ENCODE measurements at regions of chr13 and their contacts with region 1.

Region 1: DNA sequence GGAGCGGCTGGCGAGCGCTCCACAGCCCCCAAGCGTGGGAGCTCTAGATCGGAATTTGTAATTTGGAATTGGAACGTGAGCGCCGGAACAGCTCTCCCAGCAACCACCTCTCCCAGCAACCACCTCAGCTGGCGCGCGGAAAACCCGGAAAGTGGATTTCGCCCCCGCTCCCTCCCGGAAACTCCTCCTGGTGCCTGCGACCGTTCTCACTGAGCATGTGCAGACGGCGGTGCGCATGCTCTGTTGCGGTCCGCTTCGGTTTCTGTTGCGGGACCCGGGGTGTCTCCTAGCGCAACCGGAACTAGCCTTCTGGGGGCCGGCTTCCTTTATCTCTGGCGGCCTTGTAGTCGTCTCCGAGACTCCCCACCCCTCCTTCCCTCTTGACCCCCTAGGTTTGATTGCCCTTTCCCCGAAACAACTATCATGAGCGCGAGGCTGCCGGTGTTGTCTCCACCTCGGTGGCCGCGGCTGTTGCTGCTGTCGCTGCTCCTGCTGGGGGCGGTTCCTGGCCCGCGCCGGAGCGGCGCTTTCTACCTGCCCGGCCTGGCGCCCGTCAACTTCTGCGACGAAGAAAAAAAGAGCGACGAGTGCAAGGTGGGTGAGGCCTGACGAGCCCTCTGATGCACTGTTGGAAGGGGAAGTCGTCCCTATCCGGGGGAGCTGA is at the start of gene TM9SF2:
- DNase-seq: peak; percentile 94 to 98 (median 96)
- ATAC-seq: peak; percentile 70
- H3K4me3 ChIP-seq: peak within 1 kb of the TSS; percentile 93
- H3K4me3 Mint-ChIP-seq: peak within 1 kb of the TSS; percentile 94 to 100 (median 97)
- H3K27ac ChIP-seq: peak within 1 kb of the TSS; percentile 94
- H3K27ac Mint-ChIP-seq: peak within 1 kb of the TSS; percentile 96 to 99 (median 98)
- H3K4me1 ChIP-seq: peaks cover 47 to 65% of the 10 kb centered on the region in 2 donors
- H3K4me1 Mint-ChIP-seq: peaks cover 57 to 93% (median 85%) of the 10 kb centered on the region in 7 donors
- H3K27me3 ChIP-seq: no peaks in the 10 kb centered on the region
- H3K27me3 Mint-ChIP-seq: peaks cover 0 to 4% (median 0%) of the 10 kb centered on the region in 5 donors
- total RNA-seq, gene TM9SF2: 38.0 to 76.3 (median 53.1) TPM

Region 2: DNA sequence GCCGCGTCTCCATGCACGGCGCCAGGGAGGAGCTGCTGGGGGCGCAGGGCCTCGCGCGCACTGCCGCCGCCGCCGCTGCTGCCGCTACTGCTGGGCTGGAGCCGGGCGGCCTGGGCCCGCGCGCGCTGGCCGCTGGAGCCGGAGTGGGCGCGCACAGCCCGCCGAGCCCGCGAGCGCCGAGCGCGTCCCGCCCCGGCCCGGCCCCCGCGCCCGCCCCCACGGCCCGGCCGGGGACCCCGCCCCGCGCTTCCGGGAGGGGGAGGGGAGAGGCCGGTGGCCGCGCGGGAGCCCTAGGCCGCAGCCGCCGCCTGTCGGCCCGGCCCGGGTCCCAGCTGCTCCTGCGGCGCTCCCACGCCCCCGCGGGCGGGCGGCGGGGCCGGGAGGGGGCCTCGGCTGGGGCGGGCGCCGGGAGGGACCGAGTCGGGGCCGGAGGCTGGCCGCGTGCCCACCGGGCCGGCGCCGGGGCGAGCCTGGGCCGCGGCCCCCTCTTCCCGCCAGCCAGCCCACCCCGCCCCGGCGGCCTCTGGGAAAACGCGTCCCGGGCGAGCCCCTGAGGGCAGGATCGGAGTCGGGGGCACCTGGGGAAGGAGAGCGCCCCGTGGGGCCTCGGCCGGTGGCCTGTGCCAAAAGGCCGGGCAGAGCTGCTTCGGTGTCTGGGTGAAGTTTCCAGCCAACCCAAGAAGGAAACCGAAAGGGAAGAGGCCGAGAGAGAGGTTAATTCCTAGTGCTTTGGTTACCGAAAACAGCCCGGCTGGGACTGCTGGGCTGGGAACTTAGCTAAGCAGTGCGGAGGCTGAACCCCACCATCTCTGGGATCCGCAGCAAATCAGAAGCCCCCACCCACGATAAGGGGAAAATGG is 924.1 kb before region 1 on chr13 and contains the start of gene STK24:
- CTCF ChIA-PET with region 1: no interaction called
- POLR2A ChIA-PET with region 1: no interaction called
- intact Hi-C with region 1: loop called in 1 of 2 experiments (anchors 5 kb)
- DNase-seq: peak in 5 of 9 donors; percentile 34 to 87 (median 66)
- ATAC-seq: peak; percentile 85
- H3K4me3 ChIP-seq: peak within 1 kb of the TSS; percentile 72
- H3K4me3 Mint-ChIP-seq: peak within 1 kb of the TSS; percentile 84 to 99 (median 93)
- H3K27ac ChIP-seq: peak within 1 kb of the TSS; percentile 85
- H3K27ac Mint-ChIP-seq: peak within 1 kb of the TSS; percentile 84 to 96 (median 93)
- H3K4me1 ChIP-seq: peaks cover 26 to 35% of the 10 kb centered on the region in 2 donors
- H3K4me1 Mint-ChIP-seq: peaks cover 35 to 48% (median 37%) of the 10 kb centered on the region in 7 donors
- H3K27me3 ChIP-seq: no peaks in the 10 kb centered on the region
- H3K27me3 Mint-ChIP-seq: no peaks in the 10 kb centered on the region
- total RNA-seq, gene STK24: 90.1 to 148 (median 121) TPM

Region 3: DNA sequence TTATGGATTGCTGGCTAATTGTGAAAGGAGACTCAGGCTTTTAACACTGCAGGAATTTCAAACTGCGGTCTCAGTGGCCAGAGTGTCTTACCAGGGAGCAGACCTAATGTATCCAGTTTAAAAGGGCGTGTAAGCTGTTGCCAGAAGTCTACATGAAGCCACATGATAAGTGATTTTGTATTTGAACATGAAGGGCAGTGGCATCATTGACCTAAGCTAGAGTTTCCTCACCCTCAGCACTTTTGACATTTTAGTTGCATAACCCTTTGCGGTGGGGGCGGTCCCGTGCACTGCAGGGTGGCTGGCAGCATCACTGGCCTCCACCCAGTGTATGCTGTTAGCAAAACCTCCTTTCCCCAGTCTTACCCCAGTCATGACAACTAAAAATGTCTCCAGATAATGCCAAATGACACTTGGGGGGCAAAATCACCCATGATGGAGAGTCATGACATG is 219.5 kb before region 1 on chr13:
- CTCF ChIA-PET with region 1: no interaction called
- POLR2A ChIA-PET with region 1: no interaction called
- intact Hi-C with region 1: loop called (anchors 5 to 10 kb)
- DNase-seq: peak in 7 of 9 donors; percentile 45 to 65 (median 55)
- ATAC-seq: peak; percentile 85
- H3K4me3 ChIP-seq: peak overlapping the region; percentile 10
- H3K4me3 Mint-ChIP-seq: peak overlapping the region; percentile 36 to 85 (median 72)
- H3K27ac ChIP-seq: peak overlapping the region; percentile 73
- H3K27ac Mint-ChIP-seq: peak overlapping the region; percentile 86 to 99 (median 97)
- H3K4me1 ChIP-seq: peaks cover 83 to 87% of the 10 kb centered on the region in 2 donors
- H3K4me1 Mint-ChIP-seq: peaks cover 64 to 99% (median 94%) of the 10 kb centered on the region in 7 donors
- H3K27me3 ChIP-seq: no peaks in the 10 kb centered on the region
- H3K27me3 Mint-ChIP-seq: no peaks in the 10 kb centered on the region

Region 4: GRCh38 chr13:99380921-99381645 is 120.2 kb before region 1 on chr13:
- CTCF ChIA-PET with region 1: no interaction called
- POLR2A ChIA-PET with region 1: no interaction called
- intact Hi-C with region 1: loop called (anchors 1 to 2 kb)
- DNase-seq: peak in 8 of 9 donors; percentile 55 to 73 (median 62)
- ATAC-seq: peak; percentile 51
- H3K4me3 ChIP-seq: peak overlapping the region; percentile 1
- H3K4me3 Mint-ChIP-seq: peak overlapping the region; percentile 63 to 85 (median 76)
- H3K27ac ChIP-seq: peak overlapping the region; percentile 85
- H3K27ac Mint-ChIP-seq: peak overlapping the region; percentile 94 to 99 (median 98)
- H3K4me1 ChIP-seq: peaks cover 77 to 88% of the 10 kb centered on the region in 2 donors
- H3K4me1 Mint-ChIP-seq: peaks cover 48 to 100% (median 98%) of the 10 kb centered on the region in 7 donors
- H3K27me3 ChIP-seq: no peaks in the 10 kb centered on the region
- H3K27me3 Mint-ChIP-seq: no peaks in the 10 kb centered on the region

Region 5: DNA sequence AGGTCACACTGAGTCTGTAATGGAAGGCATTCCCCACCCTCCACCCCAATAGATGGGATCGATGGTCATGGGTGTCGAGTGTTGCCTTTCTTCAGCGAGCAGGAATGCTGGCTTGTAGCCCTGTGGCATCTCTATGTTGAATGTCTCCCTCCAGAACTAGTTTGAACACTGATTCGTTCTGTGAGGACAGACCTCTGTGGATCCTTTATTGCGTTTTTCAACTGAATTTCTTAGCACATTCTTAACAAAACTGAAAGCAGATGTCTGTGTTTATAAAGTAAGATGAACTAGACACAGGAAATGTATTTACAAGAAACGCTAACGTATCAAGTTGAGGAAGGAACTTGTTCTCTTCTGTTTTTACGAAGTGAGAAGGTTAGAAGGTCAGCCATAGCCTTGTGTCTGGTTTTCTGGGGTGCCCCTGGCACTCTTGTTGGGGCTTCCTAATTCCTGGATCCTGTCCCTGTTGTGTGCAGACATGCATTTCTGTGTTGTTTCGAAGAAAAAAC is 36.8 kb before region 1 on chr13:
- CTCF ChIA-PET with region 1: interaction called, 3 read pairs
- POLR2A ChIA-PET with region 1: interaction called, 8 read pairs
- intact Hi-C with region 1: loop called (anchors 1 kb)
- DNase-seq: peak in 6 of 9 donors; percentile 13 to 56 (median 48)
- ATAC-seq: peak; percentile 67
- H3K4me3 ChIP-seq: peak overlapping the region; percentile 17
- H3K4me3 Mint-ChIP-seq: peak overlapping the region; percentile 50 to 79 (median 68)
- H3K27ac ChIP-seq: peak overlapping the region; percentile 60
- H3K27ac Mint-ChIP-seq: peak overlapping the region; percentile 89 to 99 (median 97)
- H3K4me1 ChIP-seq: peaks cover 15 to 17% of the 10 kb centered on the region in 2 donors
- H3K4me1 Mint-ChIP-seq: peaks cover 23 to 51% (median 46%) of the 10 kb centered on the region in 7 donors
- H3K27me3 ChIP-seq: no peaks in the 10 kb centered on the region
- H3K27me3 Mint-ChIP-seq: peaks cover 0 to 9% (median 0%) of the 10 kb centered on the region in 5 donors

Region 6: GRCh38 chr13:99577934-99578917 is 76.9 kb after region 1 on chr13:
- CTCF ChIA-PET with region 1: no interaction called
- POLR2A ChIA-PET with region 1: no interaction called
- intact Hi-C with region 1: no loop called
- DNase-seq: no peak
- ATAC-seq: no peak
- H3K4me3 ChIP-seq: no peak overlapping the region
- H3K4me3 Mint-ChIP-seq: no peak overlapping the region
- H3K27ac ChIP-seq: no peak overlapping the region
- H3K27ac Mint-ChIP-seq: peak overlapping the region in 3 of 9 donors; percentile 21 to 79 (median 37)
- H3K4me1 ChIP-seq: no peaks in the 10 kb centered on the region
- H3K4me1 Mint-ChIP-seq: peaks cover 0 to 13% (median 2%) of the 10 kb centered on the region in 7 donors
- H3K27me3 ChIP-seq: no peaks in the 10 kb centered on the region
- H3K27me3 Mint-ChIP-seq: peaks cover 0 to 2% (median 0%) of the 10 kb centered on the region in 5 donors

Region 7: GRCh38 chr13:99677116-99677951 is 176.0 kb after region 1 on chr13:
- CTCF ChIA-PET with region 1: no interaction called
- POLR2A ChIA-PET with region 1: no interaction called
- intact Hi-C with region 1: no loop called
- DNase-seq: no peak
- ATAC-seq: no peak
- H3K4me3 ChIP-seq: no peak overlapping the region
- H3K4me3 Mint-ChIP-seq: no peak overlapping the region
- H3K27ac ChIP-seq: no peak overlapping the region
- H3K27ac Mint-ChIP-seq: no peak overlapping the region
- H3K4me1 ChIP-seq: no peaks in the 10 kb centered on the region
- H3K4me1 Mint-ChIP-seq: peaks cover 0 to 11% (median 0%) of the 10 kb centered on the region in 7 donors
- H3K27me3 ChIP-seq: no peaks in the 10 kb centered on the region
- H3K27me3 Mint-ChIP-seq: no peaks in the 10 kb centered on the region

Region 8: GRCh38 chr13:100588331-100589177 is 1087.2 kb after region 1 on chr13 and contains the start of gene GGACT:
- CTCF ChIA-PET with region 1: no interaction called
- POLR2A ChIA-PET with region 1: no interaction called
- intact Hi-C with region 1: loop called (anchors 2 to 5 kb)
- DNase-seq: peak; percentile 75 to 90 (median 87)
- ATAC-seq: peak; percentile 97
- H3K4me3 ChIP-seq: peak within 1 kb of the TSS; percentile 78
- H3K4me3 Mint-ChIP-seq: peak within 1 kb of the TSS; percentile 82 to 92 (median 85)
- H3K27ac ChIP-seq: peak within 1 kb of the TSS; percentile 79
- H3K27ac Mint-ChIP-seq: peak within 1 kb of the TSS; percentile 81 to 95 (median 92)
- H3K4me1 ChIP-seq: peaks cover 7 to 42% of the 10 kb centered on the region in 2 donors
- H3K4me1 Mint-ChIP-seq: peaks cover 28 to 60% (median 50%) of the 10 kb centered on the region in 7 donors
- H3K27me3 ChIP-seq: no peaks in the 10 kb centered on the region
- H3K27me3 Mint-ChIP-seq: no peaks in the 10 kb centered on the region
- total RNA-seq, gene GGACT: 5.3 to 8.7 (median 7.4) TPM

Measured in naive thymus-derived CD4-positive, alpha-beta T cell (primary cell).